Breast epithelium (tissue), 4 donors: ENCODE measurements at regions of chr6 and their contacts with region 1.

Region 1: DNA sequence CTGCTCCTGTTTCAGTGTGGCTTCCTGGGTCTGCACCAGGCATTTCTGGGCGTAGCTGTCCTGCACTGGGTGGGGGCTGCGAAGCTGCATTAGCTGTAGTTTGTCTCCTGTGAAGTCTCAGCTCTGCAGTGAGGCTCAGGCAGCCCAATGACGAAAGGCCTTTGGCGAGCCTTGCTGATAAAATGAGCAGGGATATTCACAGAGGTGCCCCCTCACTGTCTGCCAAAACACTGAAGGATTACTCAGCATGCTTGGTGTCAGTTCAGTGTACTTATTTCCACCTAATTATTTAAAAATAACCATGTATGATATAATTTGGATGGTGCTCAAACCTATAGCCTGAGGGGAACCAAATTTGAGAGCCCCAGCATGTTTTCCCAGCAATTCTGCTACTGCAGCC is 73.5 kb downstream of the ECT2L start:
- DNase-seq: no peak
- H3K4me3 ChIP-seq: no peak overlapping the region
- H3K27ac ChIP-seq: no peak overlapping the region
- H3K4me1 ChIP-seq: no peaks in the 10 kb centered on the region
- H3K27me3 ChIP-seq: no peaks in the 10 kb centered on the region
- CTCF ChIP-seq: no peak
- POLR2A ChIP-seq: no peak

Region 2: DNA sequence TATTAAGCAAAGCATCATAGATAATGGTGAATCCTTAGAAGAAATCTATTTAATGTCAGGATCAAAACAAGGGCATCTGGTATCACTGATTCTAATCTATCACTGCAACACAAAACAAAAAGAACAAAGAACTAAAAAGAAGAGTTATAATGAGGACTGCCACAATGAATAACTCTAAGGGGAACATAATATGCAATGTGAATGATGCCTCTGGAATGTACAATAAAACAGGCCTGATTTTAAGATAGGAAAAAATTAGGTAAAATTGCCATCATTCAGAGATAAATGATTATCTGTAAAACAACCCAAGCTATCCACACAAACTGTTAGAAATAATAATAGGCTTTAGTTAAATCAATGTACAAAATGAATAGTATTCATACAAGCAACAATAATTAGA is 1441.7 kb after region 1 on chr6:
- intact Hi-C with region 1: loop called (anchors 5 kb)
- DNase-seq: no peak
- H3K4me3 ChIP-seq: no peak overlapping the region
- H3K27ac ChIP-seq: no peak overlapping the region
- H3K4me1 ChIP-seq: no peaks in the 10 kb centered on the region
- H3K27me3 ChIP-seq: no peaks in the 10 kb centered on the region
- CTCF ChIP-seq: no peak
- POLR2A ChIP-seq: no peak